Activated CD8-positive, alpha-beta T cell treated with anti-CD3 and anti-CD28 coated beads for 36 hours (primary cell): ENCODE measurements at regions of chr3 and their contacts with region 1.

Region 1: DNA sequence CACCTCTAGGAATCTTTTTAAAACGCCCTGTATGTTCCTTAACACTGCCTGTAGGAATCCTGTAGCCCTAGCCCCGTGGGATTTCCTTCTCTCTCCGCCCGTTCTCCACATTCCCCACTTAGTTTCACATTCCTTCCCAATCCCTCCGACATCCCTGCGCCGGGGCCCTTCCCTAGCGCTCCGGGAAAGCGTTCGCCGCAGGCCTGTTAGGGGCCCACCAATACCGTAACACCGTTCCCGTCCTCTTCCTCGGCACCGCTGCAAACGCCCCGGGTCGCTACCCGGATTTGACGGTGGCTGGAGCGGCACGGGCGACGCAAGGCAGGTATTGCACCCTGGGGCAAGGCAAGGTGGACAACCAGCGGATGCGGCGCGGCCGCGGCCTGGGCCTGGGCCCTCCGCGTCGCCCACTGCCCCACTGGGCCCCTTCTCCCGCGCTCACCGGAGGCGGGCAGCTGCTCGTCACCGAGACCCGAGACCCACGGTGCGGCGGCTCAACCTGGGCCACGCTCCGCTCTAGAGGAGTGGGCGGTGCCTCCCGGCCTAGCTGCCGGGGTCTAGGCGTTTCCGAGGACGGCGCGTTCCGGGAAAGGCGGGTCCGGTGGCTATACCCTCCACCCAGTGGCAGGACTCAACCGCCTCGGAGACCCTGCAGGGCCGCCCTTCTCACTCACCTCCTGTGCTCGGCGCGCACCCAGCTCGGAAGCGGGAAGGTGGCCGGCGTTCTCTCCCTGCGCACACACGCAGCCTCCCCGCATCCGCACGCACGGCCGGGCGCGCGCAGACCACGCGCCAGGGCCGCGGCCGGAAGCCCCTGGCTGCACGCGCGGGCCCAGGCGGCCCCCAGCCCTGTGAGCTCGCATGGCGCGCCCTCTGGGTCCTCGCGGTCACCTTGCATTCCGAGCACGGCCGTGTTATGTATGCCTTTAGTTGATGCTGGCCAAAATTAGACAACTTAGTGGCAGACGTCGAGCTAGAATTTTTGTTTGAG is at the start of gene B3GALNT1:
- DNase-seq: peak; percentile 40
- ATAC-seq: peak; percentile 74
- H3K4me3 Mint-ChIP-seq: peak within 1 kb of the TSS; percentile 62
- H3K27ac Mint-ChIP-seq: peak within 1 kb of the TSS; percentile 19
- H3K4me1 Mint-ChIP-seq: peaks cover 7% of the 10 kb centered on the region
- H3K27me3 Mint-ChIP-seq: peaks cover 35% of the 10 kb centered on the region
- CTCF ChIP-seq: no peak
- total RNA-seq, gene B3GALNT1: 2.2 to 3.2 TPM

Region 2: GRCh38 chr3:161423911-161424522 is 319.2 kb after region 1 on chr3:
- CTCF ChIA-PET with region 1: no interaction called
- POLR2A ChIA-PET with region 1: no interaction called
- intact Hi-C with region 1: loop called (anchors 5 kb)
- DNase-seq: no peak
- ATAC-seq: peak; percentile 42
- H3K4me3 Mint-ChIP-seq: no peak overlapping the region
- H3K27ac Mint-ChIP-seq: no peak overlapping the region
- H3K4me1 Mint-ChIP-seq: no peaks in the 10 kb centered on the region
- H3K27me3 Mint-ChIP-seq: no peaks in the 10 kb centered on the region
- CTCF ChIP-seq: peak; percentile 83